Testis (tissue), 5 donors: ENCODE measurements at regions of chr14 and their contacts with region 1.

Region 1: DNA sequence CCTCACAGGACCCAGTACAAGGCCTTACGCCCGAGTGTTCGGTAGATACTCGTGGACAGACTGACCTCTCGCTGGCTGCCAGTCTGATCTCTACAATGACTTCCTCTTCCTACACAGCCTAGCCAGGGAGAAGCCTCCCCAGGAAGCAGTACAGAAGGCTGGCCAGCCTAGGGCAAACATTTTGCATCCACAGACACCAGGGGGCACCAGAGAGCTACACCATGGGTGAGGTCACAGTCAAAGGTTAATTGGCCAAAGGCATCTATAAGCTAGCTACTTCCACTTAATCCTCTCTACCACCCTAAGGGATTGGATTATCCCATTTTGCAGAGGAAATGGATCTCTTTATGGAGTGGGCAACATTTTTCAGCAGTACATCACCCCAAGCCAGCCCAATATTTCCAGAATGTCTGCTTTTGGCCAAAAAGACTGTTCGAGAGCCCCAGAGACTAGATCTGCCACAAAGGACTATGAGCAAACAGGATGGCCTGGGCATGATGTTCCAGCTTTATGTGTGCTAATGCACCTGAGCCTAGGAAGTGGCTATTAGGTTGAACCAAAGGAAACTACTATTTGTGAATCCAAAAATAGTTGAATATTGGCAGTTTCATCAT is 14.6 kb upstream of the PNMA1 start:
- DNase-seq: peak; percentile 91
- H3K4me3 ChIP-seq: no peak overlapping the region
- H3K27ac ChIP-seq: peak overlapping the region; percentile 66 to 75
- H3K4me1 ChIP-seq: peaks cover 62% of the 10 kb centered on the region
- H3K27me3 ChIP-seq: no peaks in the 10 kb centered on the region
- CTCF ChIP-seq: peak; percentile 88 to 96 (median 95)
- POLR2A ChIP-seq: no peak

Region 2: DNA sequence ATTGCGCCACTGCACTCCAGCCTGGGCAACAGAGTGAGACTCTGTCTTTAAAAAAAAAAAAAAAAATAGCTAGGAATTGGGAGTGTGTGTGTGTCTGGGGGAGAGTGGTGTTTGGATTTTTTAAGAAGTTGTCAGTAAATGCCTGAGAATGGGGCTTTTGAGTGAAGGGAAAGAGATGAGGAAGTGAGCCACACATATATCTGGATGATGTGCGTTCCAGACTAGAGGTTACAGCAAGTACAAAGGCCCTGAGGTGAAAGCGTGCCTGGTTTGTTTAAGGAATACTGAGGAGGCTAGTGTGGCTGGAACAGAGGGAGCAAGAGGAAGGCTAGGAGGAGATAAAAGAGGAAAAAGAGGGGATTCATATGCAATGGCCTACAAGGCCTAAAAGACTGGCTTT is 421.6 kb before region 1 on chr14:
- intact Hi-C with region 1: no loop called
- DNase-seq: no peak
- H3K4me3 ChIP-seq: no peak overlapping the region
- H3K27ac ChIP-seq: no peak overlapping the region
- H3K4me1 ChIP-seq: peaks cover 4% of the 10 kb centered on the region
- H3K27me3 ChIP-seq: no peaks in the 10 kb centered on the region
- CTCF ChIP-seq: no peak
- POLR2A ChIP-seq: no peak

Region 3: DNA sequence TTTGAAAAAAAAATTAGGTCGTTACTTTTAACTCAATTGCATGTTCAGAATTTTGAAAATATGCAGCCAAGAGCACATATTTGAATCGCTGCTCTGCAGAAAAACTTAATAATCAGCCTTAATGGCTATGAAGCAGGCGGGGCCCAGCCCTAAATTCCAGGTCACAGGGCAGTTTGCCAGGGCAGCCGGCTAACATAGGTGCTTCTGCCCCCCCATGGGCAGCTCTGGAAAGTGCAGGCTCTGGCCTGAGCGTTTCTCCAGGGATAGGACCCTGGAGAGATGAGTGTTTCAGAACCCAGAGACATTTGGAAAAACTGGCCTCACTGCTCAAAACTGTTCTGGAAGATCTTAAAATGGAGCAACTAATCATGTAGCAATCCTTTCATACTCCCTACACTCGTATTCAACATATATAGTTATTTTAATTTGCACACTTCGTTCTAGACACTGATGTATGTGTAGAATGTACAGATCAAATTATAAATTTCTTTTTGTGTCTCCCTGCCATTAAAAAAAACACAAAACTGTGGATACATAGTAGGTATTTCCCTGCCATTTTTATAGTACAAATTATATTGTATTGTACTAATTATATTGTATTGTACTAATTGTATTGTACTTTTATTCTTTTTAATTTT is 96.8 kb after region 1 on chr14:
- intact Hi-C with region 1: loop called (anchors 5 kb)
- DNase-seq: peak; percentile 96
- H3K4me3 ChIP-seq: no peak overlapping the region
- H3K27ac ChIP-seq: peak overlapping the region in 1 of 2 donors; percentile 64
- H3K4me1 ChIP-seq: no peaks in the 10 kb centered on the region
- H3K27me3 ChIP-seq: no peaks in the 10 kb centered on the region
- CTCF ChIP-seq: peak; percentile 81 to 88 (median 81)
- POLR2A ChIP-seq: no peak

Region 4: GRCh38 chr14:73949744-73950734 is 221.2 kb after region 1 on chr14 and contains the starts of genes COQ6 and FAM161B:
- intact Hi-C with region 1: no loop called
- DNase-seq: peak; percentile 97
- H3K4me3 ChIP-seq: peak within 1 kb of the TSS; percentile 72 to 92
- H3K27ac ChIP-seq: peak within 1 kb of the TSS; percentile 83 to 87
- H3K4me1 ChIP-seq: no peaks in the 10 kb centered on the region
- H3K27me3 ChIP-seq: no peaks in the 10 kb centered on the region
- CTCF ChIP-seq: peak in 2 of 3 experiments; percentile 29 to 58
- POLR2A ChIP-seq: no peak
- total RNA-seq, gene COQ6: 61.0 to 69.8 TPM
- total RNA-seq, gene FAM161B: 15.0 to 26.0 TPM